ENCODE measurements at regions of chr3 and their contacts with region 1.

Region 1: GRCh38 chr3:45832691-45833090 is 9.2 kb downstream of the LZTFL1 start:
- DNase-seq: no peak
- H3K4me3 ChIP-seq: no peak overlapping the region
- H3K27ac ChIP-seq: no peak overlapping the region
- H3K4me1 ChIP-seq: no peaks in the 10 kb centered on the region
- H3K27me3 ChIP-seq: no peaks in the 10 kb centered on the region
- CTCF ChIP-seq: peak; percentile 52

Region 2: DNA sequence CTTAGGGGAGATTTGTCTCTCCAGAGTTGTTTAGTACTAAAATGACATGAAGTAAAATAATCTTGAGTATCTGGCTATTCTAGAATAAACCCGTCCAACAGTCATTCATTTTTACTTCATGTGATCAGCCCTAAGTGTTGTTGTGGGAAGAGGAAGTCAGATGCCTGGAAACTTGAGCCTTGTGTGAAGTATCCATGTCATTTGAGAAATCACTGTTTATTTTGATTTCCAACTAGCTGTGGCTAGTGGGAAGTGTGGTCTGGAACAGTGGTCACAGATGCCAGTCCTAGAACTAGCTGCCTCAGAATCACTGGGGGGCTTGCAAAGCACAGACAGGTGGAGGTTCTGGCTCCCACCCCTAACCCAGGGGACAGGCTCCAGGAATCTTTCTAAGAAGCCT is 315.9 kb before region 1 on chr3:
- CTCF ChIA-PET with region 1: no interaction called
- POLR2A ChIA-PET with region 1: no interaction called
- intact Hi-C with region 1: loop called (anchors 10 kb)
- DNase-seq: no peak
- H3K4me3 ChIP-seq: no peak overlapping the region
- H3K27ac ChIP-seq: no peak overlapping the region
- H3K4me1 ChIP-seq: no peaks in the 10 kb centered on the region
- H3K27me3 ChIP-seq: no peaks in the 10 kb centered on the region
- CTCF ChIP-seq: no peak

Region 3: DNA sequence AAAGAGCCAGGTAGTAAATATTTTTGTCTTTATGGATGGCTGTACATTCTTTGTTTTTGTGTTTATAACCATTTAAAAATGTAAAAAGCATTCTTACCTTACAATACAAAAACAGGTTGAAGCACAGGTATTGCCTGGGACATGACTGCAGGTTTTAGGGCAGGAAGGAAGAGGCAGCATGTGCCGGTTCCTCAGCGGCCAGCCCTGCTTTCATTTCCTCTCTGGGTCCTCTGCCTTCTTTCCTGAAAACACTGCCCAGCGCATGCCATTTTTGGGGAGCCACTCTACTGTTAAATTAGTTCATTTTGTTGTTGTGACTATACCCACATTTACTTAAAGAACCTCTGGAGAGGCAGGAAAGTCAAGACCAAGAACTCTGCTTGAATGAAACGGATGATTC is 90.9 kb before region 1 on chr3:
- CTCF ChIA-PET with region 1: no interaction called
- POLR2A ChIA-PET with region 1: no interaction called
- intact Hi-C with region 1: no loop called
- DNase-seq: no peak
- H3K4me3 ChIP-seq: no peak overlapping the region
- H3K27ac ChIP-seq: no peak overlapping the region
- H3K4me1 ChIP-seq: no peaks in the 10 kb centered on the region
- H3K27me3 ChIP-seq: no peaks in the 10 kb centered on the region
- CTCF ChIP-seq: no peak

Region 4: GRCh38 chr3:45817831-45818522 is 14.7 kb before region 1 on chr3:
- CTCF ChIA-PET with region 1: no interaction called
- POLR2A ChIA-PET with region 1: interaction called, 11 read pairs
- intact Hi-C with region 1: no loop called
- DNase-seq: peak; percentile 69 to 95
- H3K4me3 ChIP-seq: peak overlapping the region; percentile 23; the same call in 1 of the 2 replicates
- H3K27ac ChIP-seq: peak overlapping the region; percentile 94
- H3K4me1 ChIP-seq: peaks cover 42% of the 10 kb centered on the region
- H3K27me3 ChIP-seq: no peaks in the 10 kb centered on the region
- CTCF ChIP-seq: no peak

Measured in PC-9 (cell line).